CD8-positive, alpha-beta T cell (primary cell): ENCODE measurements at regions of chr16 and their contacts with region 1.

Region 1: GRCh38 chr16:28491970-28492474 is at the start of gene CLN3:
- DNase-seq: peak; percentile 74 to 95 (median 89)
- ATAC-seq: peak; percentile 48
- H3K4me3 ChIP-seq: peak within 1 kb of the TSS; percentile 95 to 96
- H3K4me3 Mint-ChIP-seq: peak within 1 kb of the TSS; percentile 97
- H3K27ac ChIP-seq: peak within 1 kb of the TSS; percentile 91 to 97
- H3K27ac Mint-ChIP-seq: peak within 1 kb of the TSS; percentile 100
- H3K4me1 ChIP-seq: peaks cover 42% of the 10 kb centered on the region
- H3K4me1 Mint-ChIP-seq: peaks cover 67% of the 10 kb centered on the region
- H3K27me3 ChIP-seq: no peaks in the 10 kb centered on the region
- H3K27me3 Mint-ChIP-seq: no peaks in the 10 kb centered on the region
- CTCF ChIP-seq: no peak
- total RNA-seq, gene CLN3: 37.0 to 43.2 TPM

Region 2: DNA sequence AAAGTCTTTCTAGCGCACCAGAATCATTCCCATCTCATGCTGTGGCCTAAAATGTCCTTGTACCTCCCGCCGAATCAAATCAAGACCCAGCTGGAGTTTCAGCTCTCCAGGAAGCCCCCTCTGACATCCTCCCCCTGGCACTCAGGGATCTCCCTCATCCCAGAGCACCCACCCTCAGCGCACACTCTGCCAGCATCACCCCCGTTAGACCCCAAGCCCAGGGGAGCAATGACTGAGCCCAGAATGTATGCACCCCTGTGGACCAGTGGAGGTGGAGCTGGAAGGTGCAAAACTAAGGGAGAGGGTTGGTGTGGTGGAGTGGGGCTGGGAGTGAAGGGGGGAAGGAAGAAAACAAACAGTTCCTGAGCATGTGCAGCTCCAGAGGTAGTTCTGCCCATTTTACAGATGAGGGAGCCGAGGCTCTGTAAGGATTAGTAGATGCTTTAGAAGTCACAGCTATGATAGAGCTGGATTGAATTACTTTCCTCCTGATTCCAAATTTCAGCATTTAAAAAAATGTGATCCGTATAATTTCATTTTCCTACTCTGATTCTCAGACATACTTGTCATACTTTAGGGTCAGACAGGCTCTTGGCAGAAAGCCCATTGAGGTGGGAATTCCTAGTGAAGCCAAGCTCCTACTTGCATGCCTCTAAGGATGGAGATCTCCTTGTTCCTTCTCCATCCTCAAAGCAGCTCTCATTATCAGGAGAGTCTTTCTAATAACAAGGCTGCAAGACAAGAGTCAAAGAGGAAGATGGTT is 699.4 kb before region 1 on chr16:
- CTCF ChIA-PET with region 1: no interaction called
- POLR2A ChIA-PET with region 1: no interaction called
- intact Hi-C with region 1: no loop called
- DNase-seq: no peak
- ATAC-seq: no peak
- H3K4me3 ChIP-seq: no peak overlapping the region
- H3K4me3 Mint-ChIP-seq: no peak overlapping the region
- H3K27ac ChIP-seq: no peak overlapping the region
- H3K27ac Mint-ChIP-seq: no peak overlapping the region
- H3K4me1 ChIP-seq: no peaks in the 10 kb centered on the region
- H3K4me1 Mint-ChIP-seq: no peaks in the 10 kb centered on the region
- H3K27me3 ChIP-seq: peaks cover 0 to 3% of the 10 kb centered on the region in 2 experiments
- H3K27me3 Mint-ChIP-seq: peaks cover 14% of the 10 kb centered on the region
- CTCF ChIP-seq: no peak

Region 3: DNA sequence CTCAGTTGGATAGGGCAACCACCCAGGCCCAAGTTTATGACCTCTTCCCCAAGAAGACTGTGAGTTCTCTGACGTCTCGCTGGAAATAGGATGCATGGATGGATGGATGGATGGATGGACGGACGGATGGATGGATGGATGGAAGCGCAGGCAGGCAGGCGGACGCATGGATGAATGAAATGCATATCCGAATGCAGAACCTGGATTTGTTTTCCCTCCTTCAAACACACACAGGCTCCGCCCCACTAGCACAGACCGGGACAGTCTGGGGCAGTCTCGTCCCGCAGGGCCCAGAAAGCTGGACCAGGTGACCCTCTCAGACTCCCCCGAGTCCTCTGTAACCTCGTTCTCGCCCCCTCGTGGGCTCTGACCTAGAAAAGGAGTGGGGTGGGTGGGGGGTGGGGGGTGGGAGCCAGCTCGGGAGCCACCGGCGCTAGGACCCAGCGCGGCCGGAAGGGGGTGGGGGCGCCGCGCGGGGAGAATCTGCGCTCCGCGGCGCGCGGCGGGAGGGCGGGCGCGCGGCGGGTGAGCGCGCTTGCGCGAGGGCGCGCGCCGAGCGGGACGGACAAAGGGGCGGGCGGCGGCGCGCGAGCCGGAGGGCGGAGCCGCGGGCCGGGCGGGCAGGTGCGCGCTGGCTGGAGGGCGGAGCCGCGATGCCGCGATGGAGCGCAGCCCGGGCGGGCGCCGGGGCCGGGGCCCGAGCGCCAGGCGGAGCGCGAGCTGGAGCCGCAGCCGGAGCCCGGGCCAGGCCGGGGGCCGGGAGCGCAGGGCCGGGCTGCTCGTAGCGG is 200.0 kb before region 1 on chr16 and contains the start of gene SBK1:
- CTCF ChIA-PET with region 1: no interaction called
- POLR2A ChIA-PET with region 1: interaction called, 3 read pairs
- intact Hi-C with region 1: loop called in 1 of 2 experiments (anchors 1 kb)
- DNase-seq: peak; percentile 68 to 94 (median 84)
- ATAC-seq: peak; percentile 90
- H3K4me3 ChIP-seq: peak within 1 kb of the TSS; percentile 82 to 92
- H3K4me3 Mint-ChIP-seq: peak within 1 kb of the TSS; percentile 94
- H3K27ac ChIP-seq: peak within 1 kb of the TSS; percentile 56 to 75
- H3K27ac Mint-ChIP-seq: peak within 1 kb of the TSS; percentile 93
- H3K4me1 ChIP-seq: peaks cover 74% of the 10 kb centered on the region
- H3K4me1 Mint-ChIP-seq: peaks cover 67% of the 10 kb centered on the region
- H3K27me3 ChIP-seq: no peaks in the 10 kb centered on the region
- H3K27me3 Mint-ChIP-seq: no peaks in the 10 kb centered on the region
- CTCF ChIP-seq: no peak
- total RNA-seq, gene SBK1: 16.5 to 17.1 TPM

Region 4: DNA sequence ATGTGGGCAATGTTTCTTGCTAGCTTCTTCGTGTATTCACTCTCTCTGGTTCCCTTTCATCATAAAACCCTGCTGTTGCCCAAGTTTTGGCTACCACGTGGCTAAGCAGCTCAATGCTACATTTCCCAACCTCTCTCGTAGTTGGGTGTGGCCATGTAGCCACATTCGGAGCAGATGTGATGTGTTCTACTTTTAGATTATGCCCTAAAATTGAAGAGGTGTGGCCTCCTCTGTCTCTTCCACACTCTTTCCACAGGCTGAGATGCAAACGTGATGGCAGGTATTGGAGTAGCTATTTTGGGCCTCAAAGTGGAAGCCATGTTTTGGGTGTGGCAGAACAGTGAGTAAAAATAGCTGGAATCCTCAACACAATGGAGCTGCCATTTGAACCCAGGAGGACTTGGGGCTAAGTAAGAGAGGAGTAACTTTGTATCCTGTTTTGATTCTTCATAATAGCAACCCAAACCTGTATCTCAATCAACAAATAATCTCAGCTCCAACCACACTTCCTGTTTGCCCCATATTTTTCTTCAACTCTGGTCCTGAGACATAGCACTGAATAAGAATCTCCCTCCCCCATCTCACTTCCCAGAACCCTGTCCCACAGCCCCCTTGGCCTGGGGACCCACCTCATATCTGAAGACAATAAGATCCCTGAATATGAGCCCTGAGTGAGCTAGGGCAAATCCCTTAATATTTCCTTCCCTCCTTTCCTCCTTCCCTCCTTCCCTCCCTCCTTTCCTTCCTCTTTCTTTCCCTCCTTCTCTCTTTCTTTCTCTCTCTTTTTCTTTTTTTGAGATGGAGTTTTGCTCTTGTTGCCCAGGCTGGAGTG is 42.7 kb after region 1 on chr16:
- CTCF ChIA-PET with region 1: no interaction called
- POLR2A ChIA-PET with region 1: interaction called, 26 read pairs
- intact Hi-C with region 1: loop called in 1 of 2 experiments (anchors 2 kb)
- DNase-seq: peak in 3 of 9 experiments; percentile 16 to 55 (median 53)
- ATAC-seq: peak; percentile 64
- H3K4me3 ChIP-seq: no peak overlapping the region
- H3K4me3 Mint-ChIP-seq: peak overlapping the region; percentile 63
- H3K27ac ChIP-seq: peak overlapping the region in 1 of 2 experiments; percentile 66
- H3K27ac Mint-ChIP-seq: peak overlapping the region; percentile 92
- H3K4me1 ChIP-seq: peaks cover 15% of the 10 kb centered on the region
- H3K4me1 Mint-ChIP-seq: peaks cover 40% of the 10 kb centered on the region
- H3K27me3 ChIP-seq: no peaks in the 10 kb centered on the region
- H3K27me3 Mint-ChIP-seq: no peaks in the 10 kb centered on the region
- CTCF ChIP-seq: no peak

Region 5: GRCh38 chr16:28561557-28562187 is 69.7 kb after region 1 on chr16:
- CTCF ChIA-PET with region 1: no interaction called
- POLR2A ChIA-PET with region 1: no interaction called
- intact Hi-C with region 1: no loop called
- DNase-seq: no peak
- ATAC-seq: no peak
- H3K4me3 ChIP-seq: no peak overlapping the region
- H3K4me3 Mint-ChIP-seq: no peak overlapping the region
- H3K27ac ChIP-seq: no peak overlapping the region
- H3K27ac Mint-ChIP-seq: no peak overlapping the region
- H3K4me1 ChIP-seq: peaks cover 8% of the 10 kb centered on the region
- H3K4me1 Mint-ChIP-seq: peaks cover 41% of the 10 kb centered on the region
- H3K27me3 ChIP-seq: no peaks in the 10 kb centered on the region
- H3K27me3 Mint-ChIP-seq: no peaks in the 10 kb centered on the region
- CTCF ChIP-seq: no peak

Region 6: DNA sequence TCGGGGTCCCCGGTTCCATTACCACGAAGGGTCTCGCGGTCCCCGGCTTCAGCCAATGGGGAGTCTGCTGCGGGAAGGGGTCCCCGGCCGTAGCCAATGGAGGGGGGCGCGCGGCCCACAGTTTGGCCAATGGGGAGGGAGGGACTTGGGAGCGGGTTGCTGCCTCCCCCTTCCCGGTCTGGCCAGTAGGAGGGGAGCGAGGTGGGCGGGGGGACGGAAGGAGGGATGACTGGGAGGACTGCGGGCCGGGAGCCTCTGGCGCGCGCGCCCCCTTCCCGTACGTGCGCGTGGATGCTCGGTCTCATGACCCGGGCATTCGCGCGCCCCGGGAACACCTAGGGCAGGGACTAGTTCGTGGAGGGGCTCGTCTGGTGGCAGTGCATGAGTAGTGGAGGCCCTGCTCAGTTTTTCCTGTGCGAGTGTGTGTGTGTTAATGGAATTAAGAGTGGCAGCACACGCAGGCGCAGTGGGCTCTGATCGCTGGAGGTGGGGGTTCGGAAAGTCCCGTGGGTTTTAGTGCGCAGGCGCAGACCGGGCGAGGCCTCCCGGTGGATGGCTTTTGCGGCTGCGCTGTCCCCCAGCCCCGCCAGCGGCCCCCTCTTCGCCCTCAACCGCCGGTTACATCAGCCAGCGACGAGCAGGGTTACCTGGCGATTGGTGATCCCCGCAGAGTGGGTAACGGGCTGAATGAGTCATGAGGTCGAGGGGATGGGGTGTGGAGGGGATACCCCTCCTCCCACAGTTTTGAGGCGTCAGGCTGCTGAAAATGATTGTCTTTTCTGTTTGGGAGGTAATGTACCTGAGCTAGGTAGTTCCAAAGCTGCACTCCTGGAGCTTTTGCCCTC is 332.1 kb after region 1 on chr16:
- CTCF ChIA-PET with region 1: no interaction called
- POLR2A ChIA-PET with region 1: no interaction called
- intact Hi-C with region 1: loop called (anchors 1 to 2 kb)
- DNase-seq: peak; percentile 88 to 97 (median 95)
- ATAC-seq: peak; percentile 67
- H3K4me3 ChIP-seq: peak overlapping the region; percentile 74 to 94
- H3K4me3 Mint-ChIP-seq: peak overlapping the region; percentile 97
- H3K27ac ChIP-seq: peak overlapping the region; percentile 93 to 94
- H3K27ac Mint-ChIP-seq: peak overlapping the region; percentile 99
- H3K4me1 ChIP-seq: peaks cover 30% of the 10 kb centered on the region
- H3K4me1 Mint-ChIP-seq: peaks cover 43% of the 10 kb centered on the region
- H3K27me3 ChIP-seq: no peaks in the 10 kb centered on the region
- H3K27me3 Mint-ChIP-seq: no peaks in the 10 kb centered on the region
- CTCF ChIP-seq: peak; percentile 21

Region 7: GRCh38 chr16:28863929-28864793 is 372.1 kb after region 1 on chr16:
- CTCF ChIA-PET with region 1: no interaction called
- POLR2A ChIA-PET with region 1: interaction called, 5 read pairs
- intact Hi-C with region 1: loop called in 1 of 2 experiments (anchors 5 kb)
- DNase-seq: peak in 4 of 9 experiments; percentile 20 to 70 (median 60)
- ATAC-seq: no peak
- H3K4me3 ChIP-seq: peak overlapping the region; percentile 97 to 100
- H3K4me3 Mint-ChIP-seq: peak overlapping the region; percentile 99
- H3K27ac ChIP-seq: peak overlapping the region; percentile 84 to 97
- H3K27ac Mint-ChIP-seq: peak overlapping the region; percentile 99
- H3K4me1 ChIP-seq: peaks cover 16% of the 10 kb centered on the region
- H3K4me1 Mint-ChIP-seq: peaks cover 33% of the 10 kb centered on the region
- H3K27me3 ChIP-seq: no peaks in the 10 kb centered on the region
- H3K27me3 Mint-ChIP-seq: no peaks in the 10 kb centered on the region
- CTCF ChIP-seq: no peak

Region 8: DNA sequence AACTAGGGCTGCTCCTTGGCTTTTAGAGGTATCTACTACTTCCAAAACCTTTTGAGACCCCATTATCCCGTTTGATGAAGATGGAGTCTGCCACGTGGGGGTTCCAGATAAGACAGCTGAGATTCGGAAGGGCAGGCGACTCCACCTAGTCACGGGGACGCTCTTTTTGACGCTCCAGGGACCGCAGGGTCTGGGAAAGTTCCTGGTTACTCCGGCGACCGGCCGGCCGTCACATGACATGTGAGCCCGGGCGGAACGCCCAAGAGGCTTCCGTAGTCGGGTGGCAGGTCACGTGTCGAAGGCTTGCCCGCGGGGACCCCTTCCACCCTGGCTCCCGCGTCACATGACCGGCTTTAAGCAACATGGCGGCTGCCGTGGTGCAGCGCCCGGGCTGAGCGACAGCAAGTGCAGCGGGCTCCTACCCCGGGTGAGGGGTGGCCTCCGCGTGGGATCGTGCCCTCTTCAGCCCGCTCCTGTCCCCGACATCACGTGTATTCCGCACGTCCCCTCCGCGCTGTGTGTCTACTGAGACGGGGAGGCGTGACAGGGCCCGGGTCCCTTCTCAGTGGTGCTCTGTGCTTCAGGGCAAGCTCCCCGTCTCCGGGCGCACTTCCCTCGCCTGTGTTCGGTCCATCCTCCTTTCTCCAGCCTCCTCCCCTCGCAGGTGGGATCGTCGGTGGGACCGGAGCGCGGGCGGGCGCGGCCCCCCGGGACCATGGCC is 482.6 kb after region 1 on chr16 and contains the start of gene SPNS1:
- CTCF ChIA-PET with region 1: no interaction called
- POLR2A ChIA-PET with region 1: no interaction called
- intact Hi-C with region 1: loop called in 1 of 2 experiments (anchors 5 kb)
- DNase-seq: peak; percentile 78 to 95 (median 90)
- ATAC-seq: peak; percentile 87
- H3K4me3 ChIP-seq: peak within 1 kb of the TSS; percentile 68 to 96
- H3K4me3 Mint-ChIP-seq: peak within 1 kb of the TSS; percentile 98
- H3K27ac ChIP-seq: peak within 1 kb of the TSS; percentile 55 to 79
- H3K27ac Mint-ChIP-seq: peak within 1 kb of the TSS; percentile 97
- H3K4me1 ChIP-seq: peaks cover 19% of the 10 kb centered on the region
- H3K4me1 Mint-ChIP-seq: peaks cover 41% of the 10 kb centered on the region
- H3K27me3 ChIP-seq: no peaks in the 10 kb centered on the region
- H3K27me3 Mint-ChIP-seq: no peaks in the 10 kb centered on the region
- CTCF ChIP-seq: no peak
- total RNA-seq, gene SPNS1: 31.7 to 31.8 TPM